Common myeloid progenitor, CD34-positive (primary cell): ENCODE measurements at regions of chr12 and their contacts with region 1.

Region 1: GRCh38 chr12:121811434-121812319 is 7.9 kb downstream of the SETD1B start:
- DNase-seq: peak; percentile 52 to 86 (median 81)
- H3K4me3 ChIP-seq: peak overlapping the region in 6 of 7 experiments; percentile 32 to 66 (median 60)
- H3K27ac ChIP-seq: peak overlapping the region in 1 of 2 experiments; percentile 59
- H3K4me1 ChIP-seq: peaks cover 5 to 44% (median 38%) of the 10 kb centered on the region in 4 experiments
- H3K27me3 ChIP-seq: no peaks in the 10 kb centered on the region

Region 2: DNA sequence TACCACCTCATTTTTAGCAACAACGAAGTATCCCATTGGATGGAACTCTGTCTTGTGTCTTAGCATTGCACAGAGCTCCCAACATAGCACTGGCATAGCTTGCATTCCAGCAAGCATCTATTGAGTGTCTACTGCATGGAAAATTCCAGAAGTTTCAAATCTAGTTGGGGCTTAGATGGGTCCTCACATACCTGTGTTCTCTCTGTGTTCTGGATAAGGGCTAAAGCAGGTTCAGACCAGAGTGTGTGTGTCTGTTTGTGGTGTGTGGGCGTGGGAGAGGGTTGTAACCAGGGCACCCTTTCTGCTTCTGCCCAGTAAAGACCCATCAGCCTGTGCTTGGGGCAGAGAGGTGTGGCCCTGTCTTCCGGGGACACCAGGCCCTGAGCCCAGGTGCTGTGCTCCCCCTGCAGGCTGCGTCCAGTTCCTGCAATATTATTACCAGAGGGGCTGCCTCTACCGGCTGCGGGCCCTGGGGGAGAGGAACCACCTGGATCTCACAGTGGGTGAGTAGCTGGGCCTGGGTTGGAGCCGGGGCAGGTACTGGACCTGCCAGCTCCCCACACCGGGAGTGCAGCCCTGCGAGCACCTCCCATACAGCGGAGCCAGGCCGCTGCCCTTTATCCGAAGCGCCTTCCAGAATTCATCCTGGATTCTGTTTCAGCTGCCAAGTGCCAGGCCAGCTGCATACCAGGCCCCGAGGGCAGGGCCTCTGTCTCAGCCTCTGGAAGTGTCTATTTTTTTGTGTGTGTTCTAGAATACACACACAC is 38.5 kb before region 1 on chr12:
- CTCF ChIA-PET with region 1: interaction called, 15 read pairs
- POLR2A ChIA-PET with region 1: no interaction called
- DNase-seq: peak; percentile 62 to 76 (median 75)
- H3K4me3 ChIP-seq: no peak overlapping the region
- H3K27ac ChIP-seq: no peak overlapping the region
- H3K4me1 ChIP-seq: peaks cover 0 to 11% (median 8%) of the 10 kb centered on the region in 4 experiments
- H3K27me3 ChIP-seq: no peaks in the 10 kb centered on the region

Region 3: GRCh38 chr12:121781998-121782979 is 29.4 kb before region 1 on chr12:
- CTCF ChIA-PET with region 1: interaction called, 20 read pairs
- POLR2A ChIA-PET with region 1: interaction called, 4 read pairs
- DNase-seq: peak; percentile 48 to 86 (median 82)
- H3K4me3 ChIP-seq: peak overlapping the region in 2 of 7 experiments; percentile 25 to 33
- H3K27ac ChIP-seq: peak overlapping the region; percentile 27 to 73
- H3K4me1 ChIP-seq: peaks cover 0 to 46% (median 34%) of the 10 kb centered on the region in 4 experiments
- H3K27me3 ChIP-seq: no peaks in the 10 kb centered on the region

Region 4: DNA sequence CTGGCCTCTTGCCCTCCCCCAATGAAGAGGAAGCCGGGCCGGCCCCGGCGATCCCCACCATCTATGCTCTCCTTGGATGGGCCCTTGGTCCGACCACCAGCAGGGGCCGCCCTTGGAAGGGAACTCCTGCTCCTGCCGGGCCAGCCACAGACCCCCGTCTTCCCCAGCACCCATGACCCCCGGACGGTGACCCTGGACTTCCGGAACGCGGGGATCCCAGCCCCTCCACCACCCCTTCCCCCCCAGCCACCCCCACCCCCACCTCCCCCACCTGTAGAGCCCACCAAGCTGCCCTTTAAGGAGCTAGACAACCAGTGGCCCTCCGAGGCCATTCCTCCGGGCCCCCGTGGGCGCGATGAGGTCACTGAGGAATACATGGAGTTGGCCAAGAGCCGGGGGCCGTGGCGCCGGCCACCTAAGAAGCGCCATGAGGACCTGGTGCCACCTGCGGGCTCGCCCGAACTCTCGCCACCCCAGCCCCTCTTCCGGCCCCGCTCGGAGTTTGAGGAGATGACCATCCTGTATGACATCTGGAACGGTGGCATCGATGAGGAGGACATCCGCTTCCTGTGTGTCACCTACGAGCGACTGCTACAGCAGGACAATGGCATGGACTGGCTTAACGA is 11.5 kb after region 1 on chr12:
- CTCF ChIA-PET with region 1: interaction called, 20 read pairs
- POLR2A ChIA-PET with region 1: no interaction called
- DNase-seq: no peak
- H3K4me3 ChIP-seq: no peak overlapping the region
- H3K27ac ChIP-seq: no peak overlapping the region
- H3K4me1 ChIP-seq: no peaks in the 10 kb centered on the region
- H3K27me3 ChIP-seq: no peaks in the 10 kb centered on the region

Region 5: GRCh38 chr12:121888478-121889266 is 77.0 kb after region 1 on chr12 and contains the start of gene PSMD9:
- CTCF ChIA-PET with region 1: interaction called, 28 read pairs
- POLR2A ChIA-PET with region 1: no interaction called
- DNase-seq: peak; percentile 97 to 98 (median 98)
- H3K4me3 ChIP-seq: peak within 1 kb of the TSS; percentile 72 to 94 (median 90)
- H3K27ac ChIP-seq: peak within 1 kb of the TSS; percentile 87 to 91
- H3K4me1 ChIP-seq: peaks cover 3 to 22% (median 16%) of the 10 kb centered on the region in 4 experiments
- H3K27me3 ChIP-seq: no peaks in the 10 kb centered on the region